WTC11 (cell line): ENCODE measurements at regions of chr4 and their contacts with region 1.

Region 1: DNA sequence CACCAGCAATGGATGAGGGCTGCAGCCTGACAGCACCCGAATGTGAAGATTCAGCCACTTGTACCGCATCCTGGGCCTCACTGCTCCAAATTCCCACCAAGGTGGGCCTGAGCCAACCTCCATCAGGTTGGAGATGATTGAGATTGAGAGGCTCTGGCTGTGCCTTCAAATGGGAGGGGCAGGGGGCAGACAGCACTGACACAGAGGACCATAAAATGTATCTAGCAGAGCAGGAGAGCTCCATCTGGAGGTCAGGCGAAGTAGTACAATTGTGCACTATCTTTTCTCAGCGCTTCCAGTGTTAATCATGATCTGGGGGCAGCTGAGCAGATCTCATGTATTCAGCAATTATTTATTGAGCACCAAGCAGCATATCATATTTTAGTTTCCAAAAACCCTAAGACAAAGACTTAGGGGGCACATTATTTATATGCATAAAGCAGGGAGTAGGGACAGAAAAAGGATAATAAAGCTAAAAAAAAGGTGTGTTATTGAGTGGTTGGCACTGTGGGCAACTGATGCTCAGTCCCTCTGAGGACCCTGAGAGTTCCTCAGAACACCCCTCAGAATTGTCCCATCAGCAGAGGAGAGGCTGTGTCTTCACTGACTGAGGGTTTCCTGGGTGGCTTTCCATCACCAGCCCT is 31.6 kb upstream of the C1QTNF7 start:
- DNase-seq: peak; percentile 75
- ATAC-seq: peak; percentile 91
- H3K4me3 Mint-ChIP-seq: no peak overlapping the region
- H3K27ac Mint-ChIP-seq: no peak overlapping the region
- H3K4me1 Mint-ChIP-seq: peaks cover 23% of the 10 kb centered on the region
- H3K27me3 Mint-ChIP-seq: no peaks in the 10 kb centered on the region; the same call in 1 of the 2 replicates
- CTCF ChIP-seq: peak; percentile 69

Region 2: GRCh38 chr4:15231265-15232091 is 164.8 kb before region 1 on chr4:
- CTCF ChIA-PET with region 1: interaction called, 12 read pairs
- POLR2A ChIA-PET with region 1: no interaction called
- DNase-seq: peak; percentile 77
- ATAC-seq: peak; percentile 96
- H3K4me3 Mint-ChIP-seq: no peak overlapping the region
- H3K27ac Mint-ChIP-seq: no peak overlapping the region
- H3K4me1 Mint-ChIP-seq: peaks cover 17% of the 10 kb centered on the region
- H3K27me3 Mint-ChIP-seq: no peaks in the 10 kb centered on the region
- CTCF ChIP-seq: peak; percentile 64

Region 3: DNA sequence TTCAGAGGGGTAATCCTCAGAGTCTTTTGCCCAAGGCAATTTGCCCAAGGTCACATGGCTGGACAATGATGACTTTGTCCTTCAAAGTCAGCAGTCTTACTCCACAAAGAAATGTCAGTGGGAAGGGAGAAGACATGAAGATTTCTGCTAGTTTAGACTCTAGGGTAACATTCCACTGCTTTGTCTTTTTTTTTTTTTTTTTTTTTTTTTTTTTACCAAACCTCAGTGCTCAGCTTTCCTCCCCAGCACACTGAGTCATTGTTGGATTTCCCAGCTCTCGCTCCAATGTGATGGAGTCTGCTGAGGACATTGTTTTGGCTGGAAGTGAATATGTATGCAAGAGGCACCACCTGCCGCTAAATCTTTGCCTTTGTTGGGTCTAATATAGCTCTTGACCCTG is 24.4 kb after region 1 on chr4:
- CTCF ChIA-PET with region 1: interaction called, 11 read pairs
- POLR2A ChIA-PET with region 1: no interaction called
- DNase-seq: no peak
- ATAC-seq: peak; percentile 73
- H3K4me3 Mint-ChIP-seq: no peak overlapping the region
- H3K27ac Mint-ChIP-seq: no peak overlapping the region
- H3K4me1 Mint-ChIP-seq: peaks cover 13% of the 10 kb centered on the region
- H3K27me3 Mint-ChIP-seq: no peaks in the 10 kb centered on the region
- CTCF ChIP-seq: no peak